ENCODE measurements at regions of chr12 and their contacts with region 1.

Region 1: DNA sequence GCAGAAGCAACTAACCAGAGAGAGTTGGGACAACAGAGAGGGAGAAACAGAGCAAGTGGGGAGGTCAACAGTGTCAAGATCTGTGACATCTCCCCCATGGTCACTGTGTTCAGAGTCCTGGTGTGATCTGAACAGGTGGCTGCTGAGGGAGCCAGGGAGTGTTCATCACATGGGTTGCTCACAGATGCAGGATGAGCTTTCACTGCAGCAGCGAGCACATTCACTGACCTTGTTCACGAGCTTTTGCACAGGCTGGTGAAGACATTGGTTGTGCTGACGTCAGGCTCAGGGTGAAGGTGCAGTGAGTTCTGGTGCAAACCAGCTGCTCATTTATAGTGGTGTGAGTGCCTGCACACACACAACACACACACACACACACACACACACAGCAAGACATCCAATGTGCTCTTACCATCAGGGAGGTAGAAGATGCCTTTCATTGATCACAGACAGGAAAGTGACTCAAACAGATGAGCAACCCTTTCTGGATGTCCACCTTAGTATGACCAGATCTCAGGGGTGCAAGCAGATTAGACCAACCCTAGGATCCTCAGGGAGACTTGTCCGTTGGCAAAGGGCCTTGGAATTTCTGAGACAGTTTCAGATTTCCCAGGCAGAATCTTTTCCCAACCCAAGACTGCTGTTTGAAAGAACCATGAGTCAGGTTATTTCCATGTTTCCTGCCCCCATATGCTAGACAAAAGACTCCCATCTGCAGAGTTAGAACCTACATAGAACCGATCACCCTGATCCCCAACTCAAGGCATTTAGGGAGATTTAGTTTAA is 44.3 kb upstream of the OR10AD1 start:
- DNase-seq: no peak
- ATAC-seq: no peak
- H3K4me3 ChIP-seq: no peak overlapping the region
- H3K4me3 Mint-ChIP-seq: no peak overlapping the region
- H3K27ac ChIP-seq: no peak overlapping the region
- H3K27ac Mint-ChIP-seq: no peak overlapping the region
- H3K4me1 ChIP-seq: no peaks in the 10 kb centered on the region
- H3K4me1 Mint-ChIP-seq: no peaks in the 10 kb centered on the region
- H3K27me3 ChIP-seq: peaks cover 0 to 5% of the 10 kb centered on the region in 2 experiments
- H3K27me3 Mint-ChIP-seq: peaks cover 13 to 30% of the 10 kb centered on the region in 2 donors

Region 2: GRCh38 chr12:47963340-47964040 is 283.9 kb before region 1 on chr12 and contains the start of gene TMEM106C:
- CTCF ChIA-PET with region 1: no interaction called
- POLR2A ChIA-PET with region 1: no interaction called
- DNase-seq: peak; percentile 82 to 98 (median 88)
- ATAC-seq: peak; percentile 94 to 98 (median 96)
- H3K4me3 ChIP-seq: peak within 1 kb of the TSS; percentile 94 to 99
- H3K4me3 Mint-ChIP-seq: peak within 1 kb of the TSS; percentile 96 to 100 (median 99)
- H3K27ac ChIP-seq: peak within 1 kb of the TSS; percentile 38
- H3K27ac Mint-ChIP-seq: peak within 1 kb of the TSS; percentile 77 to 88
- H3K4me1 ChIP-seq: peaks cover 4 to 10% of the 10 kb centered on the region in 2 experiments
- H3K4me1 Mint-ChIP-seq: peaks cover 30 to 35% (median 31%) of the 10 kb centered on the region in 3 donors
- H3K27me3 ChIP-seq: peaks cover 0 to 7% of the 10 kb centered on the region in 2 experiments
- H3K27me3 Mint-ChIP-seq: peaks cover 8 to 13% of the 10 kb centered on the region in 2 donors
- total RNA-seq, gene TMEM106C: 25.8 to 36.5 (median 31.3) TPM

Region 3: DNA sequence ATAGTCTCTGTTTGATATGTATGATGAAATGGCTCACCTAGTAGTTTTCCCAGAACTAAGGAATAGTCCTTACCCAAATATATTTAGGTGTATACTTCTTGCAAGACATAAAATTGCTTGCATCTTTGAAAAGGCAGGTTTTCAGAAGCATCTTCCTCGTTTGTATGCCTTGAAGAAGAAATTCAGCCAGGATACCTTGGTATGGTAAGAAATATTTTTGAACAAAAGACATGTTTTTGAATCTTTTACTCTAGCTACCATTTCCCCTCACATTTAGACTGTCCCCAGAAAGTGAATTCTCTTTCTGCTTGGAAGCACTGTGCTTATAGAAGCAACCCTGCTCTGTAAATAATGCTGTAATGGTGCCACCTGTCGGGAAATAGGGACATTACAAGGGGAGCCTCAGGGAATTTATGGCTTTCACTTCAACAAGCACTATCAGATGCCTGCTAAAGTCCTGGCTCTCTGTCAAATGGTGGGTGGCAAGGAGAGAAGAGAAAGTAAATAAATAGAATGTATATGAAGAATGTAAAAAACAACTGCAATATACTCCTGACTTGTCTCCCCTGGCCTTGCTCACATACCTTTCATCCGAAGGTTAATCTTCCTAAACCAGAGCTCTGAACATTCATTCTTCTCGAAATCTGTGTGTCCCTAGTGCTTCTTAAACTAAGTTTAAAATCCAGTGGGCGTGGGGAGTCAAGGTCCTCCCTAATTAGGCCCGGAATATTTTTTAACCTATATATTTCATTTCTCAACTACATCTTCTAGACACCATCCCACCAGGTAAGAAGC is 57.8 kb before region 1 on chr12:
- CTCF ChIA-PET with region 1: interaction called in 1 of 2 experiments, 10 read pairs
- POLR2A ChIA-PET with region 1: no interaction called
- DNase-seq: peak in 33 of 35 experiments; percentile 19 to 82 (median 54)
- ATAC-seq: peak; percentile 75 to 90 (median 80)
- H3K4me3 ChIP-seq: no peak overlapping the region
- H3K4me3 Mint-ChIP-seq: no peak overlapping the region
- H3K27ac ChIP-seq: no peak overlapping the region
- H3K27ac Mint-ChIP-seq: no peak overlapping the region
- H3K4me1 ChIP-seq: peaks cover 0 to 2% of the 10 kb centered on the region in 2 experiments
- H3K4me1 Mint-ChIP-seq: peaks cover 0 to 4% (median 4%) of the 10 kb centered on the region in 3 donors
- H3K27me3 ChIP-seq: peaks cover 6 to 16% of the 10 kb centered on the region in 2 experiments
- H3K27me3 Mint-ChIP-seq: peaks cover 17 to 29% of the 10 kb centered on the region in 2 donors

Region 4: GRCh38 chr12:48311313-48311712 is 63.9 kb after region 1 on chr12:
- CTCF ChIA-PET with region 1: no interaction called
- POLR2A ChIA-PET with region 1: no interaction called
- DNase-seq: no peak
- ATAC-seq: no peak
- H3K4me3 ChIP-seq: no peak overlapping the region
- H3K4me3 Mint-ChIP-seq: no peak overlapping the region
- H3K27ac ChIP-seq: no peak overlapping the region
- H3K27ac Mint-ChIP-seq: no peak overlapping the region
- H3K4me1 ChIP-seq: no peaks in the 10 kb centered on the region
- H3K4me1 Mint-ChIP-seq: peaks cover 0 to 3% (median 0%) of the 10 kb centered on the region in 3 donors
- H3K27me3 ChIP-seq: no peaks in the 10 kb centered on the region
- H3K27me3 Mint-ChIP-seq: no peaks in the 10 kb centered on the region

Region 5: DNA sequence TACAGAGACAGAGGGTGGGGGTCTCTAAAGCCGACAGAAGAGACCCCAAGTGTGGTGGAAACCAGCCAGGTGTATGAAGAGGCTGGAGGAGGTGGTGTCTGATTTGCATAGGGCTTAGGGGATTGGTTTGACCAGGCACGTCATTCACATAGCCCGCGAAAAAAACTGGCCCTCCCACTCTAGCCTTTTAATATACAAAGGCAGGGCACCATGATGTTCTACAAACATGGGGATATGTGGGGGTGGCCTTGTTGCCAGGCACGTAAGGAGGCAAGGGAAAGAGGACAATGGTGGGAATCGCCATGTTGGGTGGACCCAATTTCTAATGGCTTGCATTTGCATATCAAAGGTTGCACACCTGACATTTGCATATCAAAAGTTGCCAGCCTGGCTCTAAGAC is 309.3 kb after region 1 on chr12:
- CTCF ChIA-PET with region 1: no interaction called
- POLR2A ChIA-PET with region 1: no interaction called
- DNase-seq: no peak
- ATAC-seq: no peak
- H3K4me3 ChIP-seq: no peak overlapping the region
- H3K4me3 Mint-ChIP-seq: no peak overlapping the region
- H3K27ac ChIP-seq: no peak overlapping the region
- H3K27ac Mint-ChIP-seq: no peak overlapping the region
- H3K4me1 ChIP-seq: no peaks in the 10 kb centered on the region
- H3K4me1 Mint-ChIP-seq: peaks cover 0 to 19% (median 0%) of the 10 kb centered on the region in 3 donors
- H3K27me3 ChIP-seq: peaks cover 2 to 13% of the 10 kb centered on the region in 2 experiments
- H3K27me3 Mint-ChIP-seq: peaks cover 23 to 31% of the 10 kb centered on the region in 2 donors

Measured in T-cell (primary cell).